Natural killer cell (primary cell): ENCODE measurements at regions of chr12 and their contacts with region 1.

Region 1: DNA sequence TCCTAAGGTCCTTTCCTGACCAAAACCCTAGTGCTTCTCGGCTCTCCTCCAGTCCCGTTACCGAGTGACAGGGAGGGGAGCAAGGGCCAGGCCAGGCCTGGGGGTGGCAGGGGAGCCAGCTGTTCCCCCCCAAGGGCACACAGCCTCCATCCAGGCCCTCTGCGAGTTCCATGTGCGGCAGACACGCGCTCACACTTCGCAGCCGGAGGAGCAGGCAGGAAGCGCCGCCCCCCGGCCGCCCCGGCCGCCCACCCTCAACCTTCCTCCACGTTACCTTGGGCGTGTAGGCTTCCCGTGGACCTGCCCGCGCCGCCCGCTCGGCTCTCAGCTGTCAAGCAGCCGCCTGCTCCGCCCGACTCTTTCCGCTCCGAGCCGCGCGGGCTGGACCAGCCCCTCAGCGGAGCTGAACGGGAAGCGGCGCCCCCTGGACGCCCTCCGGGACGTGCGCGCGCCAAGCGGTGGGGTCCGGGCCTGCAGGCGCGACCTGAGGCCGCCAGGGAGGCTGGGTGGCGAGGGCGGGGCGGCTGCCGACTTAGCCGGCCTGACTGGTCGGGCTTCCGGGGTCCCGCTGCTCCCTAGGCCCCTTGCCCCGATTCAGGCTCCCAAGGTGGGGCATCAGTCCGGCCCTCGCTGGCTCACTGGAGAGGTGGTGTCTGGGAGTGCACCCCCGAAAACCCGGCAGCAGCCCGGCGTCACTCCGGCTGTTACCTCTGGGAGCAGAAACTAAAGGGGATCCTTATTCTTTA is at the start of gene CRACR2A:
- DNase-seq: peak; percentile 84 to 91
- ATAC-seq: peak; percentile 82 to 91 (median 84)
- H3K4me3 ChIP-seq: peak within 1 kb of the TSS; percentile 88
- H3K4me3 Mint-ChIP-seq: peak within 1 kb of the TSS; percentile 92
- H3K27ac ChIP-seq: peak within 1 kb of the TSS; percentile 98
- H3K27ac Mint-ChIP-seq: peak within 1 kb of the TSS; percentile 93 to 96
- H3K4me1 ChIP-seq: peaks cover 49% of the 10 kb centered on the region
- H3K4me1 Mint-ChIP-seq: peaks cover 54 to 64% of the 10 kb centered on the region in 2 donors
- H3K27me3 ChIP-seq: no peaks in the 10 kb centered on the region
- H3K27me3 Mint-ChIP-seq: no peaks in the 10 kb centered on the region
- CTCF ChIP-seq: peak; percentile 74
- total RNA-seq, gene CRACR2A: 59.8 to 94.4 (median 80.5) TPM

Region 2: GRCh38 chr12:3658327-3659163 is 94.4 kb before region 1 on chr12:
- intact Hi-C with region 1: loop called (anchors 1 kb)
- DNase-seq: peak in 1 of 2 donors; percentile 62
- ATAC-seq: peak in 1 of 3 donors; percentile 38
- H3K4me3 ChIP-seq: no peak overlapping the region
- H3K4me3 Mint-ChIP-seq: no peak overlapping the region
- H3K27ac ChIP-seq: no peak overlapping the region
- H3K27ac Mint-ChIP-seq: peak overlapping the region in 1 of 2 donors; percentile 10
- H3K4me1 ChIP-seq: no peaks in the 10 kb centered on the region
- H3K4me1 Mint-ChIP-seq: peaks cover 0 to 5% of the 10 kb centered on the region in 2 donors
- H3K27me3 ChIP-seq: no peaks in the 10 kb centered on the region
- H3K27me3 Mint-ChIP-seq: no peaks in the 10 kb centered on the region
- CTCF ChIP-seq: peak; percentile 40

Region 3: GRCh38 chr12:3704512-3705353 is 48.2 kb before region 1 on chr12:
- intact Hi-C with region 1: loop called (anchors 10 kb)
- DNase-seq: no peak
- ATAC-seq: peak in 2 of 3 donors; percentile 26 to 55
- H3K4me3 ChIP-seq: no peak overlapping the region
- H3K4me3 Mint-ChIP-seq: peak overlapping the region; percentile 75
- H3K27ac ChIP-seq: peak overlapping the region; percentile 22
- H3K27ac Mint-ChIP-seq: peak overlapping the region; percentile 93 to 94
- H3K4me1 ChIP-seq: peaks cover 4% of the 10 kb centered on the region
- H3K4me1 Mint-ChIP-seq: peaks cover 44 to 51% of the 10 kb centered on the region in 2 donors
- H3K27me3 ChIP-seq: no peaks in the 10 kb centered on the region
- H3K27me3 Mint-ChIP-seq: no peaks in the 10 kb centered on the region
- CTCF ChIP-seq: no peak

Region 4: GRCh38 chr12:3727877-3728632 is 24.9 kb before region 1 on chr12:
- intact Hi-C with region 1: loop called (anchors 1 kb)
- DNase-seq: peak; percentile 56 to 80
- ATAC-seq: peak; percentile 82 to 88 (median 86)
- H3K4me3 ChIP-seq: peak overlapping the region; percentile 4
- H3K4me3 Mint-ChIP-seq: peak overlapping the region; percentile 88
- H3K27ac ChIP-seq: peak overlapping the region; percentile 89
- H3K27ac Mint-ChIP-seq: peak overlapping the region; percentile 88 to 95
- H3K4me1 ChIP-seq: peaks cover 39% of the 10 kb centered on the region
- H3K4me1 Mint-ChIP-seq: peaks cover 53 to 64% of the 10 kb centered on the region in 2 donors
- H3K27me3 ChIP-seq: no peaks in the 10 kb centered on the region
- H3K27me3 Mint-ChIP-seq: no peaks in the 10 kb centered on the region
- CTCF ChIP-seq: no peak

Region 5: GRCh38 chr12:3789838-3790237 is 36.9 kb after region 1 on chr12:
- intact Hi-C with region 1: no loop called
- DNase-seq: no peak
- ATAC-seq: no peak
- H3K4me3 ChIP-seq: no peak overlapping the region
- H3K4me3 Mint-ChIP-seq: no peak overlapping the region
- H3K27ac ChIP-seq: no peak overlapping the region
- H3K27ac Mint-ChIP-seq: no peak overlapping the region
- H3K4me1 ChIP-seq: no peaks in the 10 kb centered on the region
- H3K4me1 Mint-ChIP-seq: no peaks in the 10 kb centered on the region
- H3K27me3 ChIP-seq: no peaks in the 10 kb centered on the region
- H3K27me3 Mint-ChIP-seq: no peaks in the 10 kb centered on the region
- CTCF ChIP-seq: no peak

Region 6: GRCh38 chr12:3872800-3873636 is 120.1 kb after region 1 on chr12 and contains the start of gene PARP11:
- intact Hi-C with region 1: loop called (anchors 5 kb)
- DNase-seq: peak; percentile 96 to 99
- ATAC-seq: peak; percentile 95 to 100 (median 96)
- H3K4me3 ChIP-seq: peak within 1 kb of the TSS; percentile 58
- H3K4me3 Mint-ChIP-seq: peak within 1 kb of the TSS; percentile 94
- H3K27ac ChIP-seq: peak within 1 kb of the TSS; percentile 82
- H3K27ac Mint-ChIP-seq: peak within 1 kb of the TSS; percentile 98 to 99
- H3K4me1 ChIP-seq: peaks cover 19% of the 10 kb centered on the region
- H3K4me1 Mint-ChIP-seq: peaks cover 52 to 56% of the 10 kb centered on the region in 2 donors
- H3K27me3 ChIP-seq: no peaks in the 10 kb centered on the region
- H3K27me3 Mint-ChIP-seq: peaks cover 6 to 8% of the 10 kb centered on the region in 2 donors
- CTCF ChIP-seq: no peak
- total RNA-seq, gene PARP11: 18.8 to 27.3 (median 24.7) TPM